WTC11 (cell line): ENCODE measurements at regions of chr6 and their contacts with region 1.

Region 1: GRCh38 chr6:159252955-159253508 is 83.8 kb downstream of the FNDC1 start:
- DNase-seq: peak; percentile 25
- ATAC-seq: peak; percentile 97
- H3K4me3 Mint-ChIP-seq: no peak overlapping the region
- H3K27ac Mint-ChIP-seq: no peak overlapping the region
- H3K4me1 Mint-ChIP-seq: peaks cover 4% of the 10 kb centered on the region
- H3K27me3 Mint-ChIP-seq: peaks cover 11% of the 10 kb centered on the region
- CTCF ChIP-seq: peak; percentile 61

Region 2: DNA sequence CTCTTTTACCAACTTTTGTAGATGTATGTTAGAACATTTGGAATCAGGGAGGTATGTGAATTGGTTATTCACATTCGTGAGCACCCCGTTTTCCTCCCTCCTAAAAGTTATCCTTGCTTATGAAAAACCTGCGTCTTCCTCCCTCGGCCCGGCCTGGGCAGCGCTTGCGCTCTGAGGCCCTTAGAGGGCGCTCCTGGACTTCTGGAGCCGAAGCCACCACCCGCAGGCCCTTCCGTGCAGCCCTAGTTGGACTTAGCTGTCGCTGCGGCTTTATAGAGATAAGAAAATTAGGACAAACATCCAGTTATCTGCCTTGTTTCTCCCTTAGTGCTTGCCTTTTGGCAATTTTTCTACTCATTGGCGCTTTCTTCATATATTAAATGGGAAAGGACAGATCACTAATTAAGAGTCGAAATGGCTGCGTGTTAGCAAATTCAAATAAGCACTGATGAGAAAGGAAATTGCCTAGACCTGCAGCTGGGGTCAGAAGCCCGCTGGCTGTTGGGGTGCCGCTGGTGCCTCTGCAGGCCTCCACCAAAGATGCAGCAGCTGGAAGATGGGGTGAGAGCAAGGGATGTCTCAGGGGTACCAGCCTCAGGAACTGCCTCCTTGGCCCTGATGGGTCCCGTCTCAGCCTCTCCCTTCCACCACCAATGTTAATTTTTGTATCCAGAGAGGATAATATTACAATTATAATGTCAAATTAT is 78.6 kb before region 1 on chr6:
- CTCF ChIA-PET with region 1: interaction called, 16 read pairs
- POLR2A ChIA-PET with region 1: no interaction called
- DNase-seq: peak; percentile 83
- ATAC-seq: peak; percentile 81
- H3K4me3 Mint-ChIP-seq: peak overlapping the region; percentile 31; the same call in 1 of the 2 replicates
- H3K27ac Mint-ChIP-seq: no peak overlapping the region
- H3K4me1 Mint-ChIP-seq: peaks cover 8% of the 10 kb centered on the region
- H3K27me3 Mint-ChIP-seq: peaks cover 52% of the 10 kb centered on the region
- CTCF ChIP-seq: peak; percentile 79; the same call in 1 of the 2 replicates

Region 3: DNA sequence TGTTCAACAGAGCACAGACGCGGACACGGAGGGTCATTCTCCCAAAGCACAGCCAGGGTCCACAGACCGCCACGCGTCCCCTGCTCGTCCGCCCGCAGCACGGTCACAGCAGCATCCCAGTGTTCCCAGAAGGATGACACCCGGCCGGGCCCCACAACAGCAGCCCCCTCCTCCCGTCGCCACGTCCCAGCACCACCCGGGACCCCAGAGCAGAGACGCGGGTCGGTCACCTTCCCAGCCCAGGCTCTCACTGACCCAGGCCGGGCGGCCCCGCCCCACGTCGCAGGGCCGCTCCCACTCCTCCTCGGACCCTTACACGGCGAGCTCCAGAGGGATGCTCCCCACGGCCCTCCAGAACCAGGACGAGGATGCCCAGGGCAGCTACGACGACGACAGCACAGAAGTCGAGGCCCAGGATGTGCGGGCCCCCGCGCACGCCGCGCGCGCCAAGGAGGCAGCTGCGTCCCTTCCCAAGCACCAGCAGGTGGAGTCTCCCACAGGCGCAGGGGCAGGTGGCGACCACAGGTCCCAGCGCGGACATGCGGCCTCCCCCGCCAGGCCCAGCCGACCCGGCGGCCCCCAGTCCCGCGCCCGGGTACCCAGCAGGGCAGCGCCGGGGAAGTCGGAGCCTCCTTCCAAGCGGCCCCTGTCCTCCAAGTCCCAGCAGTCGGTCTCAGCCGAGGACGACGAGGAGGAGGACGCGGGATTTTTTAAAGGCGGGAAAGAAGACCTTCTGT is 19.5 kb before region 1 on chr6:
- CTCF ChIA-PET with region 1: interaction called, 23 read pairs
- POLR2A ChIA-PET with region 1: no interaction called
- DNase-seq: peak; percentile 60
- ATAC-seq: peak; percentile 90
- H3K4me3 Mint-ChIP-seq: peak overlapping the region; percentile 61
- H3K27ac Mint-ChIP-seq: no peak overlapping the region
- H3K4me1 Mint-ChIP-seq: no peaks in the 10 kb centered on the region
- H3K27me3 Mint-ChIP-seq: peaks cover 44% of the 10 kb centered on the region
- CTCF ChIP-seq: no peak

Region 4: DNA sequence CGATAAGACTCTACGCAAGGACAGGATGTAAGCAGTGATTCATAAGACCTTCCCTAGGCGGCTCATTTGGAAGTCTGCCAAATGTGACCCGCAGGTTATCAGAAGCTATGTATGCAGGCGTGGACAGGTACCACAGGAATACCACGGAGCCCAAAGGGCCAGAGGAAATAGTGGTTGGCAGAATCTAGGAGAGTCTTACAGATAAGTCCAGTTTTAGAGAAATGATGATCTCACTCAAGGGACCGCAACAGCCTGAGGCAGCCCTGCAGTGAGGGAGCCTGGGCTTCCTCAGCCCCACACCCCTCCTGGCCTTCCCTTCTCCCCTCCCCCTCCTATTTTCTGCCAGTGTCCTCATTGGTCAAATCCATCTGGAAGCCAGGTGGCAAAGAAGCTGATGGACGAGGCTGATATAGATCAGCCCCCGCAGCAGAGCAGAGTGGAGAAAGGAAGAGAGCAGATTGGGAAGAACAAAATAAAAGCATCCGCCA is 26.8 kb after region 1 on chr6:
- CTCF ChIA-PET with region 1: interaction called, 13 read pairs
- POLR2A ChIA-PET with region 1: no interaction called
- DNase-seq: no peak
- ATAC-seq: peak; percentile 63
- H3K4me3 Mint-ChIP-seq: no peak overlapping the region
- H3K27ac Mint-ChIP-seq: no peak overlapping the region
- H3K4me1 Mint-ChIP-seq: peaks cover 21% of the 10 kb centered on the region
- H3K27me3 Mint-ChIP-seq: no peaks in the 10 kb centered on the region; the same call in 1 of the 2 replicates
- CTCF ChIP-seq: no peak

Region 5: DNA sequence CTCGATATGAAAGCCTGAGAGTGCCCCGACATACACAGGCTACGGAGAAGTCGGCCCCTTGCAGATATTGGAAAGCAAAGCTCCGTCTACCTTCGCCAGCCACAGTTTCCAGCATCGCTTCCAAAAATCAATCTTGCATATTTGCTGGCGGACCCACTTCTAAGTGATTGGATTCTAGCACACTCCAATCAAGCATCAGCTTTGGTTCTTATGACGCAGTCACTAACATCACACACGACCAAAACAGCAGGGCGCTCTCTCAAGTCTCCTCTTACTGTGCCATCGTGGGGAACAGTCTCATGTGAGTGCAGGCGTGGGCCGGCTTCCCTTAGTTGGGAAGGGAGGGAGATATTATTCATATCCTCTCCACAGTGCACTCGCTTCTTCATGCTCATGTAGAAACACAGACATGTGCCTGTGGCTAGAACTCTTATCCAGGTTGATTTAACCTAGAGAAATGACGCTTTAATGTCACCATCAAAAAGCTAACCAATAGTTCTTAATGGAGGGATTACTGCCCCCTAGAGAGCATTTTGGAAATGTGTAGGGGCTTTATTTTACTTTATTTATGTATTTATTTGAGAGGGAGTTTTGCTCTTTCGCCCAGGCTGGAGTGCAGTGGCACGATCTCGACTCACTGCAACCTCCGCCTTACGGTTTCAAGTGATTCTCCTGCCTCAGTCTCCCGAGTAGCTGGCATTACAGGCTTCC is 210.2 kb after region 1 on chr6:
- CTCF ChIA-PET with region 1: interaction called, 17 read pairs
- POLR2A ChIA-PET with region 1: no interaction called
- DNase-seq: no peak
- ATAC-seq: 0 out of 2 replicates have a peak, but pooled peaks have one; percentile 22
- H3K4me3 Mint-ChIP-seq: no peak overlapping the region
- H3K27ac Mint-ChIP-seq: no peak overlapping the region
- H3K4me1 Mint-ChIP-seq: peaks cover 10% of the 10 kb centered on the region
- H3K27me3 Mint-ChIP-seq: no peaks in the 10 kb centered on the region
- CTCF ChIP-seq: peak; percentile 41; the same call in 1 of the 2 replicates

Region 6: GRCh38 chr6:159525445-159526025 is 272.5 kb after region 1 on chr6:
- CTCF ChIA-PET with region 1: no interaction called
- POLR2A ChIA-PET with region 1: no interaction called
- DNase-seq: no peak
- ATAC-seq: peak; percentile 77
- H3K4me3 Mint-ChIP-seq: no peak overlapping the region
- H3K27ac Mint-ChIP-seq: no peak overlapping the region
- H3K4me1 Mint-ChIP-seq: 0 out of 2 replicates have a peak, but pooled peaks cover 3% of the 10 kb centered on the region
- H3K27me3 Mint-ChIP-seq: peaks cover 7% of the 10 kb centered on the region; the same call in 1 of the 2 replicates
- CTCF ChIP-seq: no peak

Region 7: DNA sequence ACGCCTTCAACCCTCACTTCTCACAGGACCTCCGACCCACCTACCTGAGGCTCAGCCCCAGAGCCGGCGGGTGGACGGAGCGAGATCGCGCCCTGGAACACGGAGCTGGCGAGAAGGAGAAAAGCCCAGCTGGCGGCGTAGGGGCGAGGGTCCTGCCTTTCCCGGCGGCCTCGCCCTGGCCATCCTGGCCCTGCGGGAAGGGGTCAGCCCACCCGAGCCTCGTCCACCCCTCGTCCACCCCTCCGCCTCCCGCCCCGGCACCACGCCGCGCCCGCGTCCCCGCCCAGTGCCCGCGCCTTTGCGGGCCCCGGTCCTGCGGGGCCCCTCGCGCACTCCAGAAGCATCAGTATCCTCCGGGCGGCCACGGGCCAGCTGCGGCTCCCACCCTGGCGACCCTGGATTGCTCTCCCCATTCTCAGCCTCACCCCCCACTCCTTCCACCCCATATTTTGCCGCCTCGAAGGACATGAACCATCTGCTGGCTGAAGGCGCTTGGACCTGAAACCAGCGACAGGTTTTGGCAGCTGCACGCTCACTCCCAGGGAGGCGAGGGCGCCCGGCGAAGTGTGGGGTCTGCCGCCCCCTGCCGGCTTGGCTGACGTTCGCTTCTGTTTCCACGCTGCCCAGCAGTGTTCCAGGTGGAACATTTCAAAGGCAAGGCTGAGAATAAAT is 1514.1 kb after region 1 on chr6:
- CTCF ChIA-PET with region 1: no interaction called
- POLR2A ChIA-PET with region 1: no interaction called
- DNase-seq: peak; percentile 81
- ATAC-seq: peak; percentile 87
- H3K4me3 Mint-ChIP-seq: peak overlapping the region; percentile 84
- H3K27ac Mint-ChIP-seq: no peak overlapping the region
- H3K4me1 Mint-ChIP-seq: peaks cover 8% of the 10 kb centered on the region
- H3K27me3 Mint-ChIP-seq: peaks cover 21% of the 10 kb centered on the region
- CTCF ChIP-seq: peak; percentile 65